CD8-positive, alpha-beta memory T cell (primary cell): ENCODE measurements at regions of chr11 and their contacts with region 1.

Region 1: DNA sequence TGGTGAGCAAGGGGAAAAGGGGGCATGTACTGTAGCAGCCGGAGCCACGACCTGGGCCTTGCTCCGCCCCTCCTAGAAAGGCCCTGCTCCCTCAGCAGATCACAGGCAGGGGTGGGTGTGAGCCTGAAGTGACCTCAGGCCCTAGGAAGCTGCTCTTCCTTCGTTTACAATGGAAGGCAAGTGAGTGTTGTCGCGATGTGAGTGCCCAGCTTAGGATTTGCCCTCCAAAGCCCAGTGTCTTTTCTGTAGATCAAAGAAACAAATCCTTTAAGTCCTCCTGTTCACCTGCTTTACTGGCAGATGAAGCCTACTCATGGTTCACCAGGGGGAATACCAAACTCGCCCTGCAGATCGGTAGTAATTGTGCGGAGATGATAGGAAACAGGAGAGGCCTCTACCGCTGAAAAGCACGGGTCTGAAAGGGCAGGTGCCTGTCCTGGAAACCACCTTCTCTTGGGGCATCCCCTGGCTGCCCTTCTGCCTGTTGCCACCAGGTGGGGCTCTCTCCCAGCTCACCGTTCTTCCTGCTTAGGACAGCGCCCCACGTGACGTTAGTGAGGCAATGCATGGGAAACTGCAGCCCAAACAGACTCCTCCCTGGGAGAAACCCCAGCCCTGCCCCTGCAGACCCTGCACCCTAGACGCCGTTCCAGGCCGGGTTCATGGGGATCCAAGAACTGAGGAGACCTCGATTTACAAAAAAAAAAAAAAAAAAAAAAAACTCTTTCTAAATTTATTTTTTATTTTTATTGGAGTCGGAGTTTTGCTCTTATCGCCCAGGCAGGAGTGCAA is 45.9 kb upstream of the RAB1B start:
- DNase-seq: peak; percentile 87 to 95 (median 91)
- H3K4me3 ChIP-seq: no peak overlapping the region
- H3K4me3 Mint-ChIP-seq: no peak overlapping the region
- H3K27ac ChIP-seq: peak overlapping the region; percentile 28
- H3K27ac Mint-ChIP-seq: peak overlapping the region; percentile 82 to 99 (median 94)
- H3K4me1 ChIP-seq: peaks cover 12% of the 10 kb centered on the region
- H3K4me1 Mint-ChIP-seq: peaks cover 6 to 16% (median 12%) of the 10 kb centered on the region in 3 donors
- H3K27me3 ChIP-seq: no peaks in the 10 kb centered on the region
- H3K27me3 Mint-ChIP-seq: peaks cover 0 to 2% of the 10 kb centered on the region in 2 donors

Region 2: DNA sequence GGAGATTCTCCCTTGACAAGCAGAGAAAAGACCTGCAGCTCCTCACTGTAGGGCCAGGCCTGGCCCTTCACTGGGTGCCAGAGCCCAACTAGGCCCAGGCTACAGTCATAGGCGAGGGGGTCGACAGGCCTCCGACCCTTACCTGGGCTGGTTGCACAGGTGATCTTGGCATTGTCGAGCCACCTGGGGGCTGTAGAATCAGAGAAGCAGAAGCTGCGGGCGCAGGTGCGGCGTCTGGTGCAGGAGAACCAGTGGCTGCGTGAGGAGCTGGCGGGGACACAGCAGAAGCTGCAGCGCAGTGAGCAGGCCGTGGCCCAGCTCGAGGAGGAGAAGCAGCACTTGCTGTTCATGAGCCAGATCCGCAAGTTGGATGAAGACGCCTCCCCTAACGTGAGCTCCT is 39.0 kb after region 1 on chr11:
- CTCF ChIA-PET with region 1: interaction called, 16 read pairs
- POLR2A ChIA-PET with region 1: no interaction called
- DNase-seq: no peak
- H3K4me3 ChIP-seq: no peak overlapping the region
- H3K4me3 Mint-ChIP-seq: peak overlapping the region in 1 of 7 donors; percentile 8
- H3K27ac ChIP-seq: no peak overlapping the region
- H3K27ac Mint-ChIP-seq: peak overlapping the region in 2 of 8 donors; percentile 51 to 60
- H3K4me1 ChIP-seq: peaks cover 11% of the 10 kb centered on the region
- H3K4me1 Mint-ChIP-seq: peaks cover 11 to 23% (median 20%) of the 10 kb centered on the region in 3 donors
- H3K27me3 ChIP-seq: no peaks in the 10 kb centered on the region
- H3K27me3 Mint-ChIP-seq: peaks cover 0 to 2% of the 10 kb centered on the region in 2 donors

Region 3: GRCh38 chr11:66268283-66268951 is 45.9 kb after region 1 on chr11 and contains the start of gene RAB1B:
- CTCF ChIA-PET with region 1: interaction called, 16 read pairs
- POLR2A ChIA-PET with region 1: interaction called, 3 read pairs
- DNase-seq: peak; percentile 99 to 100 (median 100)
- H3K4me3 ChIP-seq: peak within 1 kb of the TSS; percentile 73
- H3K4me3 Mint-ChIP-seq: peak within 1 kb of the TSS; percentile 90 to 97 (median 95)
- H3K27ac ChIP-seq: peak within 1 kb of the TSS; percentile 71
- H3K27ac Mint-ChIP-seq: peak within 1 kb of the TSS; percentile 94 to 99 (median 98)
- H3K4me1 ChIP-seq: peaks cover 40% of the 10 kb centered on the region
- H3K4me1 Mint-ChIP-seq: peaks cover 50 to 56% (median 54%) of the 10 kb centered on the region in 3 donors
- H3K27me3 ChIP-seq: no peaks in the 10 kb centered on the region
- H3K27me3 Mint-ChIP-seq: peaks cover 0 to 7% of the 10 kb centered on the region in 2 donors
- total RNA-seq, gene RAB1B: 119 to 125 TPM

Region 4: DNA sequence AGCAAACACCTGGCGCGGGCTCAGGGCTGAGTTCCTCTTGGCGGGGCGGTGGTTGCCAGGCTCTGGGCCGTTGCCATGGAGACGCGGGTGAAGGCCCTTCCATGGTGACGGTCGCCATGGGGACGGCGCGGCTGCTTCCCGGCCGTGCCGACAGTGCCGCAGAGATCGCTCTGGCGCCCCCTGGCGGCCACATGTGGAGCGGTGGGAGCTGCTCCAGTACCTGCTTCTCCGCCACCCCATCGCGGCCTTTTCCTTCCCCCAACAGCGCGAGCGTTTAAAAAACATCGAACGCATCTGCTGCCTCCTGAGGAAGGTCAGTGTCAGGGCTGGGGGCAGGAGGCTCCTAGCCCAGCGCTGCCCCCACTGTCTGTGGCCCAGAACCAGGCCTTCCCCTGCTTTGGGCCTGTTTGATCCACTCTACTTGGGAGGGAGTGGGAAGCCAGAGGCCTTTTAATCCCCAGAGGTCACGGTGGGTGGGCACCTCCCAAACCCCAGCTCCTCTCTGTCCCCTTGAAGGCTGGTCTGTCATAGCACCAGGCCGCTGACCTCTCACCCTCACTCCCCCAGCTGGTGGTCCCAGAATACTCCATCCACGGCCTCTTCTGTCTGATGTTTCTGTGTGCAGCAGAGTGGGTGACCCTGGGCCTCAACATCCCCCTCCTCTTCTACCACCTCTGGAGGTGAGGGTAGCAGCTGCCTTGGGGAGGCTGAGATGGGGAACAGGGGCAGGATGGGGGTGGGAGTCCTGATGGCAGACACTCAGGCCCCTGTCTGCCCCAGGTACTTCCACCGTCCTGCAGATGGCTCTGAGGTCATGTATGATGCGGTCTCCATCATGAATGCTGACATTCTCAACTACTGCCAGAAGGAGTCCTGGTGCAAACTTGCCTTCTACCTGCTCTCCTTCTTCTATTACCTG is 60.2 kb after region 1 on chr11:
- CTCF ChIA-PET with region 1: interaction called, 74 read pairs
- POLR2A ChIA-PET with region 1: interaction called, 4 read pairs
- DNase-seq: peak; percentile 98 to 100 (median 100)
- H3K4me3 ChIP-seq: no peak overlapping the region
- H3K4me3 Mint-ChIP-seq: peak overlapping the region; percentile 35 to 85 (median 56)
- H3K27ac ChIP-seq: no peak overlapping the region
- H3K27ac Mint-ChIP-seq: peak overlapping the region; percentile 54 to 97 (median 92)
- H3K4me1 ChIP-seq: peaks cover 35% of the 10 kb centered on the region
- H3K4me1 Mint-ChIP-seq: peaks cover 31 to 49% (median 37%) of the 10 kb centered on the region in 3 donors
- H3K27me3 ChIP-seq: no peaks in the 10 kb centered on the region
- H3K27me3 Mint-ChIP-seq: peaks cover 0 to 7% of the 10 kb centered on the region in 2 donors

Region 5: GRCh38 chr11:66288671-66289547 is 66.4 kb after region 1 on chr11 and contains the start of gene YIF1A:
- CTCF ChIA-PET with region 1: interaction called, 74 read pairs
- POLR2A ChIA-PET with region 1: interaction called, 3 read pairs
- DNase-seq: peak; percentile 98 to 99 (median 98)
- H3K4me3 ChIP-seq: peak within 1 kb of the TSS; percentile 73
- H3K4me3 Mint-ChIP-seq: peak within 1 kb of the TSS; percentile 84 to 96 (median 87)
- H3K27ac ChIP-seq: peak within 1 kb of the TSS; percentile 93
- H3K27ac Mint-ChIP-seq: peak within 1 kb of the TSS; percentile 82 to 97 (median 91)
- H3K4me1 ChIP-seq: peaks cover 28% of the 10 kb centered on the region
- H3K4me1 Mint-ChIP-seq: peaks cover 27 to 47% (median 35%) of the 10 kb centered on the region in 3 donors
- H3K27me3 ChIP-seq: peaks cover 15% of the 10 kb centered on the region
- H3K27me3 Mint-ChIP-seq: peaks cover 11 to 20% of the 10 kb centered on the region in 2 donors
- total RNA-seq, gene YIF1A: 96.5 to 97.3 TPM